Activated T-helper 1 cell treated with anti-CD3 and anti-CD28 coated beads, Interleukin-12 subunit alpha, Interleukin-12 subunit beta, Interleukin-2, Interleukin-4 antibody, amounts not matched to agents 30 ng/mL and 10 ng/mL and 1 ng/mL, durations not matched to agents 14 hours and 24 hours and 36 hours (primary cell): ENCODE measurements at regions of chr20 and their contacts with region 1.

Region 1: GRCh38 chr20:45373353-45374100 is 4.6 kb downstream of the TP53TG5 start:
- DNase-seq: peak; percentile 79
- H3K4me3 Mint-ChIP-seq: peak overlapping the region; percentile 78
- H3K27ac Mint-ChIP-seq: peak overlapping the region; percentile 84
- H3K4me1 Mint-ChIP-seq: peaks cover 22% of the 10 kb centered on the region
- H3K27me3 Mint-ChIP-seq: no peaks in the 10 kb centered on the region

Region 2: GRCh38 chr20:45406259-45407066 is 32.9 kb after region 1 on chr20:
- intact Hi-C with region 1: loop called (anchors 2 kb)
- DNase-seq: peak; percentile 19
- H3K4me3 Mint-ChIP-seq: peak overlapping the region; percentile 80
- H3K27ac Mint-ChIP-seq: peak overlapping the region; percentile 77
- H3K4me1 Mint-ChIP-seq: peaks cover 21% of the 10 kb centered on the region
- H3K27me3 Mint-ChIP-seq: peaks cover 13% of the 10 kb centered on the region

Region 3: DNA sequence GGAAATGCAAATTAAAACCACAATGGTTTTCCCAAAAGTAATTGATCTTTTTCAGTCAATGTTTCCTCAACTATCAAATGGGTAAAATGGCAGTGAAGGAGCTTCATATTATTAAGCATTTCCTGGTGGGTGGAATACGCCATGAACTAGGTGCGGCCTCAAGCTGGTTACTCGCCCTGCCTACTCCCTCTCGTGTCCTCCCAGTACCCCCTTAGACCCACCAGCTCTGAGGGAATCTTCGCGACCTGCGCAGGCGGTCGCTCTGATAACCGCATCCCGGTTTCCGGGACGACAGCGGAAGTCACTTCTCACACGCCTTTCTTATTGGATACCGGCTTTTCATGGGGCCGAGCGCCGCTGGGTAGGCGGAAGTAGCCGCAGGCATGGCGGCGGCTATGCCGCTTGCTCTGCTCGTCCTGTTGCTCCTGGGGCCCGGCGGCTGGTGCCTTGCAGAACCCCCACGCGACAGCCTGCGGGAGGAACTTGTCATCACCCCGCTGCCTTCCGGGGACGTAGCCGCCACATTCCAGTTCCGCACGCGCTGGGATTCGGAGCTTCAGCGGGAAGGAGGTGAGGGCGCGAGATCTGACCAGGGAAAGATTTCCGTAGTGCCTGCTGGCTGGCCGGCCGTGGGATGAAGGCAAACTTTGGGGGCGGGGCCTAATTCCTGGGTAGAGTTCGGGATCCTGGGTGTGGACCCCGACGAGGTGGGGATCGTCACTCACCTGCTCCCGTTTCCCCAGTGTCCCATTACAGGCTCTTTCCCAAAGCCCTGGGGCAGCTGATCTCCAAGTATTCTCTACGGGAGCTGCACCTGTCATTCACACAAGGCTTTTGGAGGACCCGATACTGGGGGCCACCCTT is 42.5 kb after region 1 on chr20 and contains the start of gene PIGT:
- intact Hi-C with region 1: loop called (anchors 1 kb)
- DNase-seq: peak; percentile 86
- H3K4me3 Mint-ChIP-seq: peak within 1 kb of the TSS; percentile 94
- H3K27ac Mint-ChIP-seq: peak within 1 kb of the TSS; percentile 90
- H3K4me1 Mint-ChIP-seq: peaks cover 39% of the 10 kb centered on the region
- H3K27me3 Mint-ChIP-seq: no peaks in the 10 kb centered on the region
- total RNA-seq, gene PIGT: 89.8 and 90.6 TPM in 2 replicates

Region 4: GRCh38 chr20:45436732-45437391 is 63.3 kb after region 1 on chr20:
- intact Hi-C with region 1: loop called (anchors 1 kb)
- DNase-seq: peak; percentile 78
- H3K4me3 Mint-ChIP-seq: peak overlapping the region; percentile 69
- H3K27ac Mint-ChIP-seq: no peak overlapping the region
- H3K4me1 Mint-ChIP-seq: peaks cover 33% of the 10 kb centered on the region
- H3K27me3 Mint-ChIP-seq: no peaks in the 10 kb centered on the region

Region 5: GRCh38 chr20:45450097-45450818 is 76.7 kb after region 1 on chr20:
- intact Hi-C with region 1: loop called (anchors 1 kb)
- DNase-seq: no peak
- H3K4me3 Mint-ChIP-seq: no peak overlapping the region
- H3K27ac Mint-ChIP-seq: no peak overlapping the region
- H3K4me1 Mint-ChIP-seq: peaks cover 15% of the 10 kb centered on the region
- H3K27me3 Mint-ChIP-seq: peaks cover 8% of the 10 kb centered on the region